ENCODE measurements at regions of chr10 and their contacts with region 1.

Region 1: DNA sequence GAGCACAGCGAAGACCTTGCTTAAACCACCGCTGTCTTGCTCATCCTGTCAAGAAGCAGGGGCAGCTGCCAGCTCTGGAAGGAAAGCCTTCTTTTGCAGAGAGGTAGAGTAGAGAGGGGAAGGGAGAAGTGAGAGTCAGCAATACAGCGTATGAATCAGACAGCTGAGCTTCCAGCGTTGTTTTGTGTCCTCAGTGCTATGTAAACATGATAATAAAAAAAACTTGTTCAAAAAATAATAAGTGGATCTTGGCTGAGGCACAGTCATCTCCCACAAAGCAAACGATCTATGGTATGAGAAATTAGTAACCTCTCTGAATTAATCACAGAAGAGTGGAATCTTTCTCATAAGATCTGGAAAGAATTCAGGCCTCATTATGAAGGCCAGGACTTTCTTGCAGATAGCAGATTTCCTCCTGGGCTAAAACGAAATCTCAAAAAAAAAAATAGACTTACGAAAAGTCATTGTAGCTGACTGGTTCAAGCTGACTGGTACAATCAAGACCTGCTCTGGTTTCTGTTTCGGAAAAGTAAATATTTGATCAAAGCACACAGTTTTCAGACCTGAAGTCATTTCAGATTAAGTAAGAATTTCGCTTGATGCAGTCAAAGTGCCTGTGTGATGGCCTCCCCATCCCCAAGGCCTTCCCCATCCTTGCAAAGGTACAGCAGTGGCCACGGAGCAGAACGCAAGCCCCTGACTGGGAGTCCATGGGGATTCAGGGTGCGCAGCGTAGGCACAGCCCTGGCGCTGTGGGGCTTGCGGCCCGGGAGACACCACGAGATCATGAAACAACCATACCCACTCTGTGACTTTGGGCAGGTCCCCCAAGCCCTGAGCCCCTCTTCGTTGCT is 29.4 kb downstream of the CHST15 start:
- DNase-seq: peak in 1 of 2 experiments; percentile 31
- H3K4me3 ChIP-seq: no peak overlapping the region
- H3K4me3 Mint-ChIP-seq: no peak overlapping the region
- H3K27ac Mint-ChIP-seq: peak overlapping the region; percentile 62
- H3K4me1 ChIP-seq: peaks cover 40% of the 10 kb centered on the region
- H3K4me1 Mint-ChIP-seq: peaks cover 29% of the 10 kb centered on the region
- H3K27me3 ChIP-seq: no peaks in the 10 kb centered on the region
- H3K27me3 Mint-ChIP-seq: no peaks in the 10 kb centered on the region
- CTCF ChIP-seq: no peak

Region 2: DNA sequence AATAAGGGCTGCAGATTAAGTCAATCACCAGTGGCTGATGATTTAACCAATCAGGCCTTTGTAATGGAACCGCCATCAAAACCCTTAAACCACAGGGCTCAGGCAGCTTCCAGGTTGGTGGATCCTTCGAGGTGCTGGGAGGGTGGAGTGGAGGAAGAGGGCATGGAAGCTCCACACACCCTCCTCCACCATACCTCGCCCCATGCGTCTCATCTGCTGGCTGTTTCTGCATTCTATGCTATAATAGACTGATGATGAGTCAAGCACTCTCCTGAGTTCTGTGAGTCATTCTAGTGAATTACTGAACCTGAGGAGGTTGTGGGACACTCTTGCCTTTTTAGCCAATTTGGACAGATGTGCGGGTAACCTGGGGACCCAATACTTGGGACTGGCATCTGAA is 14.5 kb before region 1 on chr10:
- CTCF ChIA-PET with region 1: interaction called, 5 read pairs
- POLR2A ChIA-PET with region 1: no interaction called
- intact Hi-C with region 1: loop called (anchors 1 kb)
- DNase-seq: no peak
- H3K4me3 ChIP-seq: no peak overlapping the region
- H3K4me3 Mint-ChIP-seq: no peak overlapping the region
- H3K27ac Mint-ChIP-seq: peak overlapping the region; percentile 19
- H3K4me1 ChIP-seq: peaks cover 20% of the 10 kb centered on the region; the same call in 1 of the 2 replicates
- H3K4me1 Mint-ChIP-seq: no peaks in the 10 kb centered on the region
- H3K27me3 ChIP-seq: no peaks in the 10 kb centered on the region
- H3K27me3 Mint-ChIP-seq: no peaks in the 10 kb centered on the region
- CTCF ChIP-seq: no peak